HAP-1 (cell line): ENCODE measurements at regions of chr1 and their contacts with region 1.

Region 1: DNA sequence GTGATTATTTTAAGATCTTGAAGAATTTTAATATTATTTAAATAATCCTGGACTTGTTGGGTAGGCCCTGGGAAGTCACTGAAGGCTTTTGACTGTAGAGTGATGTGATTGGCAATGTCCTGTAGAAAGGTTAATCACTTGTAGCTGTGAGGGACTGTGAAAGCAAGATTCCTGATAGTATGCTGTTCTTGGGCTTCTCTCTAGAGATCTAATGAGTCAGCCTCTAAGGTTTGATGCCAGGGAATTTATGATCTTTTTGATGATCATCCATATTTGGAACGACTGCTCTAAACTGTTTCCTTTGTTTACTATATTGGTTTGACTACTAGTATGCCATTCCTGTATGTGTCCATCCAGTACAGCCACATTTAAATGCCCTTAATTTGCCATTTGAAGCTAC is 56.5 kb downstream of the CAMSAP2 start:
- DNase-seq: no peak
- H3K4me3 ChIP-seq: no peak overlapping the region
- H3K4me1 ChIP-seq: no peaks in the 10 kb centered on the region
- H3K27me3 ChIP-seq: no peaks in the 10 kb centered on the region

Region 2: DNA sequence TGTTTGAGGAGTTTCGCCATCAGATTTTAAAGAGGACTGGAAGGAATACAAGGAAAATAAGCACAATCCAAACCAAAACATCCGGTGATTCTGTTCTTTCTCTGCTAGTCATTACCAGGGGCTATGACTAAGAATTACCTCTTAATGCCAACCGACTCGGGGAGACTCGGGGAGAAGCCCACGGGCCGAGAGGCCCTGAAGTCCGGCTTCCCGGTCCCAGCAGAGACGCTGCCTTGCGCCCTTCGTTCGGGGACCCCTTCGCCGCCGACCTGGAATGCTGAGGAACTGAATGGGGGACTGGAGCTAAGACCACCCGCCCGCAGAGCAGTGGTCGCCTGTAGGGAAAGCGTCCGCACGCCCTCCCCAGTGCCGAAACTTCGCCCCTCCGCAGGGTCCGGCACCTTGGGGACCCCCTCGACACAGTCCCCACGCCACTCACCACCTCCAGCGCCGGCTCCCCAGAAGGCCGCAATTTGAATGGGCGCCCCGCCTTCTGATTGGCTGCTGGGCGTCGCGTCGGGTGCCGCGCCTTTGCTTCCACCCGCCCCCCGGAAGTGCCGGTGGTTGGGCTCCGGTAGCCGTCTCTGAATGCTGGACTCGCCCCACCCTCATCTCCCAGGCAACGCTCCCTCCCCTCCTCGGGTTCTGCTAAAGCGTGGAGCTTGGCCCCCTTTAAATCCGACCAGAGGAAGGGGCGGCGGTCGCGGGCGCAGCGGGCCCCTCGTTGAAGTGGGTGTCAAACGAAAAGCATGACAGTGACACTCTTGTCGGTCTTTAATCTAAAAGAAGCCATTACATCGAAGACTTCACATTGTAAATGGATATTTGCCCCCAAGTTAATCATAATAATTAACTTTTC is 174.7 kb before region 1 on chr1 and contains the start of gene KIF14:
- in situ Hi-C with region 1: loop called (anchors 10 kb)
- DNase-seq: peak; percentile 94 to 98
- H3K4me3 ChIP-seq: peak within 1 kb of the TSS; percentile 73
- H3K4me1 ChIP-seq: peaks cover 13% of the 10 kb centered on the region
- H3K27me3 ChIP-seq: no peaks in the 10 kb centered on the region